AG04449 (cell line): ENCODE measurements at regions of chr3 and their contacts with region 1.

Region 1: DNA sequence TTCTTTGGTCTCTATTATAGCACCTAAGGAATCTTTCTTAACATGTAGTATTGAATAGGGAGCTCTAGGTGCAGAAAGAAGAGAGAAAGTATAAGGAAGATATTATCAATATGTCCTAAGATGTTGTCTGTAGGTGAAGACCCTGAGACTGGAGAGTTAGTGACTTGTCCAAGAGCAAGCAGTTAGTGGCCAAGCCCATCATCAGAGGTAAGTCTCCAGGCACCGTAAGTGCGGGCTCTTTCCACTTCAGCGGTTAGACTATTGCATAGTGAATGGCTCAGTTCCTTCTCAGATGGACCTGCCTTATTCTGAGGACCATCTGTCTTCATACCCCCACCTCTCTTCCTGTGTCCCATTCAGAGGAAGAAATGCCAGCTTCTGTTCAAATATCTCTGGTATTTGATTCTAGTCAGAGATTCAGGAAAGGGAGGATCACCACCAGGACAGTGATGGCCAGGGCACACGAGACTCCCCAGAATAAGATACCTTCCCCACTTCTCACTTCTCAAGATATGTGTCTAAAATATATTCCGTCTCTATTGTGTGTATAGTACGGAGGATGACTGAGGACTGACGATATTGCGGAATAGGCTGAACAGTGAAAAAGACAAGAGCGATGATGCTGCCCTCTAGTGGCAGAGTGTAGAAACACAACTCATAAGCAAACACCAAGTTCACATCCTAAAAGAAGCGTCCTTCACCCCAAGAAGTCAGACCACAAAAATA is 19.1 kb upstream of the ADGRG7 start:
- DNase-seq: no peak
- H3K4me3 ChIP-seq: peak overlapping the region; percentile 10; the same call in 1 of the 2 replicates
- CTCF ChIP-seq: peak; percentile 72

Region 2: DNA sequence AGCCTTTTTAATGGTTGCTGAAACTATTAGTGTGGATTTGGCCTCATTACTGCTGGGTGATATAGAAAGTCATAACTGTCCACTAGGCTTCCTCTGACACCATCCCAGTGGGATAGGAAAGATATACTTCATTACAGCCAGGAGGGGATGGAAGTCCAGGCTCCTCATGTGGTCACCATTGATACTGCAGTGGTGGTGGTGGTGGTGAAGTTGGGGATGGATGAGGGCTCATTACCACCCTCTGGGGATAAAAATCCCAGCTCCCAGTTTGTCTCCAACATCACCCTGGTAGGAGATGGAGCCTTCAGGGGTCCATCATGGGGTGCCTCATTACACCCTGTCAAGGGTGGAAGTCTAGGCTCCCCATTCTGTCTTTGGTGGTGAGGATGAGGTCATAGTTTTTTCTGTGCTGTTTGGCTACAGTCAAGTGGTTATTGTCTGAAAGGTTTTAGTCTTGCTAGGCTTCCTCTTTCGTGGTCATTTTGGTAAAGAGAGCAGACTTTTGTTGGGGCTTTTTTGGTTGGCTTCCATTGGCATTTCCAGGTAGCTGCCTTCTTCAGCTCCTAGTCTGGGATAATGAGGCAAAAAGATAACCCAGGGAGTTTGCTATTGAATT is 445.9 kb before region 1 on chr3:
- CTCF ChIA-PET with region 1: no interaction called
- POLR2A ChIA-PET with region 1: no interaction called
- DNase-seq: no peak
- H3K4me3 ChIP-seq: no peak overlapping the region
- CTCF ChIP-seq: no peak

Region 3: GRCh38 chr3:100437721-100438622 is 152.3 kb before region 1 on chr3:
- CTCF ChIA-PET with region 1: interaction called, 10 read pairs
- POLR2A ChIA-PET with region 1: no interaction called
- DNase-seq: no peak
- H3K4me3 ChIP-seq: no peak overlapping the region
- CTCF ChIP-seq: no peak

Region 4: DNA sequence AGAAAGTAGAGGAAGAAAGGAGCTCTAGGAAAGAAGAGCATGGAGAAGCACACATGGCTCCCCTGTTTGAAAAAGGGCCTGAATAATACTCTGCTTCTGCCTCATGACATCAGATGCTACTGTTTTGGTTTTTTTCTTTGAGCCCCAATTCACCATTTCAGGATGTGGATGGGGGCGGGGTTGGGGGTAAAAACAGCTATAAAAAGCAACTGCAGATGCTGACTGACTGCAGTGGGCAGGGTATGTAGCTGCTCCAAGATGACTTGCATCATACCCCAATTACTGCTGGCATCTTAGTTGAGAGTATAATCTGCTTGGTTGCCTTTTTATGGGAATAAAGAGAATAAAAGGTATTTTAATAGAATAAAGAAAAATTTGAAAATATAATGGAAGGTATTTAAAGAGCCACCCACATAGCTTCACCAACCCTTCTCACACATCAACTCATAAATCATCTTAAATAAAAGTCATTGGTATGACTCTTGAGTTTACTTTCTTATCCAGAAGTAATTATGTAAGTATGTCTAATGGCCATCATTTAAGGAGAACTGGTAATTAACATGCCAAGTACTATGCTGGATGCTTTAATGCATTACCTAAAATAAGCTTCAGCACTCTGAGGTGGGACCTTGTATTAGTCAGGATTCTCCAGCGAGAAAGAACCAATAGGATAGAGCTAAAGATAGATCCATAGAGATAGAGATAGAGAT is 134.3 kb before region 1 on chr3:
- CTCF ChIA-PET with region 1: interaction called, 406 read pairs
- POLR2A ChIA-PET with region 1: no interaction called
- DNase-seq: no peak
- H3K4me3 ChIP-seq: no peak overlapping the region
- CTCF ChIP-seq: no peak

Region 5: DNA sequence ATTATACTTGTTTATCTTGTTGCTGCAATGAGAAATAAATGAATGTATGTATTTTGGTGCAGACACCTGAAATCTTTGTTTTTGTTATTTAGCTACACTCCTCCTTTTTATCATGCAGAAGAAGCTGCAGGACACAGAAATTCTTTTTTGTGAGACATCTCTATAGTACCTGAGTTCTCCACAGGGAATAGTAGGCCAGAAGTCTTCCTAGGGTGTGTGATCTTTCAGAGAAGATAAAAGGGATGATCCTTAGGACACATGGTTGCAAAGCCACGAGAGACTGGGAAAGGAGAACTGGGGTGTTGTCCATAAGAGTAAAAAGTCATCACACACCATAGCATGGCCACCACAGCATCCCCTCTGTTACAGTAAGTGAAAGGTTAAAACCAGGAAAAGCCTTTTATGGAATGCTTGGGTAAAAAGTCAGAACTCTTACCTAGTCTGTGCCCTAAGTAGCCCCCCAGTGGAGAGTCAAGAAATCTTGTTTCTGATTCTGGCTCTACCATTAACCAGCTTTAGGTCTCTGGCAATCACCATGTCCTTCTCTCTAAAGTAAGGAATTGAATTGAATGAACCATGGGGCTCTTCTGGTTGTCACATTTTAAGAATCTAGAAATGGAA is 12.8 kb before region 1 on chr3:
- CTCF ChIA-PET with region 1: interaction called, 17 read pairs
- POLR2A ChIA-PET with region 1: no interaction called
- DNase-seq: no peak
- H3K4me3 ChIP-seq: no peak overlapping the region
- CTCF ChIP-seq: no peak

Region 6: GRCh38 chr3:100641471-100642032 is 51.3 kb after region 1 on chr3:
- CTCF ChIA-PET with region 1: no interaction called
- POLR2A ChIA-PET with region 1: no interaction called
- DNase-seq: no peak
- H3K4me3 ChIP-seq: no peak overlapping the region
- CTCF ChIP-seq: no peak

Region 7: GRCh38 chr3:100856821-100857220 is 266.5 kb after region 1 on chr3:
- CTCF ChIA-PET with region 1: no interaction called
- POLR2A ChIA-PET with region 1: no interaction called
- DNase-seq: no peak
- H3K4me3 ChIP-seq: no peak overlapping the region
- CTCF ChIP-seq: no peak